ENCODE measurements at regions of chrX and their contacts with region 1.

Region 1: DNA sequence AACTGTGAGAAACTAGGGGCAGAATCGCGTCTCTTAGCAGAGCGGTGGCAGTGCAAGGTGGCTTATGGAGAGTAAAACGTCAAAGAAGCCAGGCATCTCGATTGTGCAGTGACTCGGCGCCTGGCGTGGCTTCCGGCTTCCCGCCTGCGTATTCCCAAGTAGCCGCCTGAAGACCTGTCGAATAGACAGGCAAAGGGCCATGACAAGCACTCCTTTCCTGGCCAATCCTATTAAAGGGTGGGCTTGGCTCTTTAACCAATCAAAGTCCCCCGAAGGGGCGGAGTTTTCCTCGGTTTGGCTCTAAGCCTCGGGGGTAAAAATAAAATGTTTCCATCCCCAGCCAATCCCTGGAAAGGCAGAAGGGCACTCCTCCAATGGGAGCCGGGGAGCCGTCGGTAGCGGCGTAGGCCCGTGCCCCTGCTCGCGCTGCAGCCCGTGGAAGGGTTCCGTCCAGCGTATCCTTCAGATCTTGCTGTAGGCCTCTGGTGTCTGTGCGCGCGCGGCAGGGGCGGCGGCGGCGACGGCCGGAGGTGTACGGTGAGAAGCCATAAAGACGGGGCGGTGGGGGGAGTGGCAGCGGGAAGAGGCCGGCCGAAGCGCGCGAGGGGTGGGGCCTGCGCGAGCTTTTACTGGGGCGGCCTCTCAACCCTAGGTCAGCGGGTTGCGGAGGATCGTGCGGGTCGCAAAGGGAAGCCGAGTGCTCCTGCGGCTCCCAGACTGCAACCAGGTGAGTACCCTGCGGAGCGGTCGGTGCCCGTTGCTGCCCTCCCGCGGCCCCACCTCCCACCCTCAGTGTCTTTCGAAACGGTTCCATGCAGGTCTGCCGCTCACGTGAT is at the start of gene KANTR:
- DNase-seq: peak; percentile 88
- ATAC-seq: peak; percentile 93
- H3K4me3 ChIP-seq: peak within 1 kb of the TSS; percentile 72 to 93
- H3K27ac ChIP-seq: peak within 1 kb of the TSS; percentile 83
- H3K4me1 ChIP-seq: peaks cover 6% of the 10 kb centered on the region; the same call in 1 of the 2 replicates
- H3K27me3 ChIP-seq: no peaks in the 10 kb centered on the region
- CTCF ChIP-seq: no peak
- total RNA-seq, gene KANTR: 6.8 TPM

Region 2: DNA sequence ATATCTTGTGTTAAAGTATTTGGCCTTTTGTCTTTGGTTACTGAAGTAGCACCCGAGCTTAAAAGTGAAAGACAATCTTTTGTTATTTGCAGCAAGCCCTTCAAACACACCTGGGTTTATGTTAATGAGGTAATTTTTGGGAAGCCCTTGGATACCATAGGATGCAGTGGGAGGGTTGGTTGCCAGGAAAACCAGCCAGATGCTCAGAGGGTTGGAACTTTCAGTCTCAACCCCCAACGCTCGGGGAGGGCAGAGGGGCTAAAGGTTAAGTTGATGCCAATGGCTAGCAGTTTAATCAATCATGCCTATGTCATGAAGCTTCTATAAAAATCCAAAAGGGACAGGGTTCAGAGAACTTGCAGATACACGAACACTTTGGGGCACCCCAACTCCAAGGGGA is 62.6 kb before region 1 on chrX:
- CTCF ChIA-PET with region 1: no interaction called
- POLR2A ChIA-PET with region 1: no interaction called
- in situ Hi-C with region 1: no loop called
- intact Hi-C with region 1: no loop called
- DNase-seq: no peak
- ATAC-seq: no peak
- H3K4me3 ChIP-seq: no peak overlapping the region
- H3K27ac ChIP-seq: no peak overlapping the region
- H3K4me1 ChIP-seq: no peaks in the 10 kb centered on the region
- H3K27me3 ChIP-seq: peaks cover 5% of the 10 kb centered on the region; the same call in 1 of the 2 replicates
- CTCF ChIP-seq: no peak

Region 3: GRCh38 chrX:53056292-53056691 is 37.7 kb before region 1 on chrX:
- CTCF ChIA-PET with region 1: no interaction called
- POLR2A ChIA-PET with region 1: no interaction called
- in situ Hi-C with region 1: no loop called
- intact Hi-C with region 1: no loop called
- DNase-seq: no peak
- ATAC-seq: no peak
- H3K4me3 ChIP-seq: no peak overlapping the region
- H3K27ac ChIP-seq: no peak overlapping the region
- H3K4me1 ChIP-seq: no peaks in the 10 kb centered on the region
- H3K27me3 ChIP-seq: no peaks in the 10 kb centered on the region
- CTCF ChIP-seq: no peak

Region 4: DNA sequence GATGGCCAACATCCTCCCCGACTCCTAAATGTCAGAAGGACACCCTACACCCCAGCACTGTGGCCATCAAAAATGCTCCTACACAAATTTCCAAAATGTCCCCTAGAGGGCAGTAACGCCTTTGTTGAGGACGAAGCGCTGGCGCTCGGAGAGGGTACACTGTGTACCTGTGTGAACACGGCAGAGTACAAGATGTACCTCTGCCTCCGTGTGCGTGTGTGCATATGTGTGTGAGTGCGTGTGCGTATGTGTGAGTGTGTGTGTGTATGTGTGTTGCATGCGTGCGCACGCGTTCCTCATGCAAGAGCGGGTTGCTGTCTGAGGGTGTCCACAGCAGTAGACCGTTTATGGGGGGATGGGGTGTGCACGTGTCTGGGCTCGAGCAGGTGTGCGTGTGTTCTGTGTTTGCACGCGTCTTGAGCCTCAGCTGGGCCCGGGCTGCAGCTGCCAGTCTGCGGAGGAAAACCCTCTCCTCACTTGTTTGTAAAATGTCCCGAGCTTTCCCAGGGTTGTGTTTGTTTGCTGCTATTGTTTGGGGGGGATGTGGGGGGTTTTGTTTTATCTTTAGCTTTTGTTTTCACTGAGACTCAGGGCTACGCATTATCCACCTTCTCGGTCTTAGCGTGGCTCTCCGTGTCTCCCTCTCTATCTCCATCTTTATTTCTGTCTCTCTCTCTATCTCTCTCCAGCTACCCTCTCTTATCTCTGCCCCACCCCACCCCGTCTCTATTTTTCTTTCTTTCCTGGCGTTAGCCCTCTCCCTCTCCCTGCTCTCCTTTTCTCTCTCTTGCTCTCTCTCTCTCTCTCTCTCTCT is 22.2 kb before region 1 on chrX:
- CTCF ChIA-PET with region 1: interaction called, 9 read pairs
- POLR2A ChIA-PET with region 1: no interaction called
- in situ Hi-C with region 1: no loop called
- intact Hi-C with region 1: loop called (anchors 1 kb)
- DNase-seq: no peak
- ATAC-seq: peak; percentile 85
- H3K4me3 ChIP-seq: peak overlapping the region; percentile 49 to 73
- H3K27ac ChIP-seq: no peak overlapping the region
- H3K4me1 ChIP-seq: peaks cover 4% of the 10 kb centered on the region; the same call in 1 of the 2 replicates
- H3K27me3 ChIP-seq: no peaks in the 10 kb centered on the region
- CTCF ChIP-seq: peak; percentile 81

Measured in Panc1 (cell line).